ENCODE measurements at regions of chr11 and their contacts with region 1.

Region 1: GRCh38 chr11:45917623-45918330 is at the start of gene PEX16:
- DNase-seq: peak; percentile 92 to 99 (median 98)
- ATAC-seq: peak; percentile 72 to 90 (median 76)
- H3K4me3 ChIP-seq: peak within 1 kb of the TSS; percentile 65 to 95 (median 92)
- H3K27ac ChIP-seq: peak within 1 kb of the TSS; percentile 80 to 93 (median 88)
- H3K4me1 ChIP-seq: peaks cover 18 to 21% (median 19%) of the 10 kb centered on the region in 3 donors
- H3K27me3 ChIP-seq: no peaks in the 10 kb centered on the region
- CTCF ChIP-seq: no peak
- total RNA-seq, gene PEX16: 18.6 to 26.8 (median 23.6) TPM

Region 2: GRCh38 chr11:45859661-45860140 is 58.1 kb before region 1 on chr11:
- intact Hi-C with region 1: loop called in 1 of 3 experiments (anchors 10 kb)
- DNase-seq: peak; percentile 92 to 98 (median 94)
- ATAC-seq: peak; percentile 79 to 89 (median 85)
- H3K4me3 ChIP-seq: no peak overlapping the region
- H3K27ac ChIP-seq: peak overlapping the region; percentile 68 to 85 (median 75)
- H3K4me1 ChIP-seq: peaks cover 34 to 49% (median 36%) of the 10 kb centered on the region in 3 donors
- H3K27me3 ChIP-seq: no peaks in the 10 kb centered on the region
- CTCF ChIP-seq: no peak